IMR-90 (cell line): ENCODE measurements at regions of chr6 and their contacts with region 1.

Region 1: GRCh38 chr6:118029967-118030366 is 122.9 kb downstream of the SLC35F1 start:
- DNase-seq: no peak
- ATAC-seq: no peak
- H3K4me3 ChIP-seq: no peak overlapping the region
- H3K27ac ChIP-seq: no peak overlapping the region
- H3K4me1 ChIP-seq: no peaks in the 10 kb centered on the region
- H3K27me3 ChIP-seq: no peaks in the 10 kb centered on the region
- CTCF ChIP-seq: no peak
- POLR2A ChIP-seq: no peak
- RAD21 ChIP-seq: no peak

Region 2: DNA sequence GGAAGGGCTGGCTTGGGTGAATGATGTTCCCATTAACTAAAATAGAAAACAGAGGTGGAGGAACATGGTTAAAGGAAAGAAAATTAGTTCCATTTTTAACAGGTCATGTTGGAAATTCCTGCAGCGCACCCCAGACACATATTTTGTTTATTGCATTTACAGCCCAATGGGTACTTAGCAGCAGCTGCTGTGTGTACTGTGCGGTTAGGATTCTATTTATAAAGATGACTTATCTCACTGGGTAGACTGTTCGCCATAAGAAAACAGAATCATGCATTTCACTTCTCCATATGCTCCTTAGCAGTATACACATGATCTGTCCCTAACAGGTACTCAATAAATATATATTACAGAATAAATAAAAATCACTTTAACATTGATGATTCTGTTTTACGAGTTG is 12.9 kb after region 1 on chr6:
- CTCF ChIA-PET with region 1: no interaction called
- POLR2A ChIA-PET with region 1: no interaction called
- dilution Hi-C with region 1: no loop called
- in situ Hi-C with region 1: no loop called
- intact Hi-C with region 1: loop called (anchors 1 kb)
- DNase-seq: no peak
- ATAC-seq: no peak
- H3K4me3 ChIP-seq: no peak overlapping the region
- H3K27ac ChIP-seq: no peak overlapping the region
- H3K4me1 ChIP-seq: no peaks in the 10 kb centered on the region
- H3K27me3 ChIP-seq: no peaks in the 10 kb centered on the region
- CTCF ChIP-seq: no peak
- POLR2A ChIP-seq: no peak
- RAD21 ChIP-seq: no peak